Activated CD4-positive, alpha-beta memory T cell treated with anti-CD3 and anti-CD28 coated beads, Interleukin-2, amount 10 ng/mL, durations not matched to agents 7 days and 5 days (primary cell): ENCODE measurements at regions of chr12 and their contacts with region 1.

Region 1: DNA sequence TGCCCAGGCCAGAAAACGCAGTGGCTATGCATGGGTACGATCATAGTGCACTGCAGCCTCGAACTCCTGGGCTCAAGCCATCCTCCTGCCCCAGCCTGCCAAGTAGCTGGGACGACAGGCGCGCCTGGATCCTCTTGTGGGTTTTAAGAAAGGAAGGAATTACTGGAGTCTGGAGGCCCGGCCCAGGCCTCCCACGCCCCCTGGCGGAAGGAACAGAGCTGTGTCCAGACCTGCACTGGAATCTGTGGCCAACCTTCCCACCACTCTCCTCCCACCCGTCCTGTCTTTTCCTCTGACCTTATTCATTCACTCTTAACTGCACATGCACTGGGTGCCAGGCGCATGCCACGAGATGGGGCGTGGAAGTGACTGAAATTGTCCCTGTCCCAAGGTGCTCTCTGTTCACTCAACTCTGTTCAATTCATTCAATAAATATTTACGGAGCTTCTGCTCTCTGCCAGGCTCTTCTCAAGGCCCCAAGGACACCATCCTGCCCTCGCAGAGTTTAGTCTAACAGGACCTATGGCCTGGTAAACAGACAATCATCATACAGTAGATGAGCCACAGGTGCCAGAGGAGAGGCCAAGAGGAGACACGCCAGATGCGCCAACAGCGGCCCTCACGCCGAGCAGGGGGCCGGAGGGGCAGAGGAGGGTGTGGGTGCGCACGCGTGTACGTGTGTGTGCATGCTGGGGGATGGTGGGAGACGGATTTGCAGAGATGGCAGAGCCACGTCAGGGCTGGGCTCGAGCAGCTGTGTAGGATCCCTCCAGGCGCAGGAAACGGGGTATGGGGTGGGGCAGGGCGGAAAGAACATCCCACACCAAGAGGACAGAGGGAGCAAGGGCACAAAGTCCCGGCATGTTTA is 13.7 kb upstream of the TMEM106C start:
- DNase-seq: peak; percentile 62
- H3K4me3 Mint-ChIP-seq: no peak overlapping the region
- H3K27ac Mint-ChIP-seq: no peak overlapping the region
- H3K4me1 Mint-ChIP-seq: peaks cover 12% of the 10 kb centered on the region
- H3K27me3 Mint-ChIP-seq: peaks cover 16% of the 10 kb centered on the region

Region 2: GRCh38 chr12:47963340-47964040 is 13.8 kb after region 1 on chr12 and contains the start of gene TMEM106C:
- CTCF ChIA-PET with region 1: interaction called, 14 read pairs
- POLR2A ChIA-PET with region 1: no interaction called
- DNase-seq: peak; percentile 92
- H3K4me3 Mint-ChIP-seq: peak within 1 kb of the TSS; percentile 99
- H3K27ac Mint-ChIP-seq: peak within 1 kb of the TSS; percentile 79
- H3K4me1 Mint-ChIP-seq: peaks cover 44% of the 10 kb centered on the region
- H3K27me3 Mint-ChIP-seq: peaks cover 35% of the 10 kb centered on the region
- total RNA-seq, gene TMEM106C: 139 to 141 TPM

Region 3: DNA sequence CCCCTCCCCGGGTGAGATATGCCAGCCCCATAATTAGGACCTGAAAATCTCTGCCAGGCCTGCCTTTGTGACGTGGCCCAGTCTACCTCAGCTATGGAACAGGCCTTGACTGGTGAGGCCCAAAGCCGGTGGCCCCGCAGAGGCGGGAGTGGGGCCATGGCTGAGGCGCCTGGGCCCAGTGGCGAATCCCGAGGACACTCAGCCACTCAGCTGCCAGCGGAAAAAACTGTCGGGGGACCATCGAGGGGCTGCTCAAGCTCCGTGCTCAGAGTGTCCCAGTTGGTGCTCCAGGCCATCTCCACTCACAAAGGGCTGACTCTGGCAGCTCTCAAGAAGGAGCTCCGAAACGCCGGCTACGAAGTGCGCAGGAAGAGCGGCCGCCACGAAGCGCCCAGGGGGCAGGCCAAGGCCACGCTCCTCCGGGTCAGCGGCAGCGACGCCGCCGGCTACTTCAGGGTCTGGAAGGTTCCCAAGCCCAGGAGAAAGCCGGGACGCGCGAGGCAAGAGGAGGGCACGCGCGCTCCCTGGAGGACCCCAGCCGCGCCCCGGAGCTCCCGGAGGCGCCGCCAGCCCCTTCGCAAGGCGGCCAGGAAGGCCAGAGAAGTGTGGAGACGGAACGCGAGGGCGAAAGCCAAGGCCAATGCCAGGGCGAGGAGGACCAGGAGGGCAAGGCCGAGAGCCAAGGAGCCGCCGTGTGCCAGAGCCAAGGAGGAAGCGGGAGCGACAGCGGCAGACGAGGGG is 379.7 kb after region 1 on chr12:
- CTCF ChIA-PET with region 1: no interaction called
- POLR2A ChIA-PET with region 1: no interaction called
- DNase-seq: no peak
- H3K4me3 Mint-ChIP-seq: no peak overlapping the region
- H3K27ac Mint-ChIP-seq: no peak overlapping the region
- H3K4me1 Mint-ChIP-seq: no peaks in the 10 kb centered on the region
- H3K27me3 Mint-ChIP-seq: peaks cover 10% of the 10 kb centered on the region